Naive thymus-derived CD4-positive, alpha-beta T cell (primary cell): ENCODE measurements at regions of chr1 and their contacts with region 1.

Region 1: GRCh38 chr1:225999227-225999911 is at the start of gene SDE2:
- DNase-seq: peak; percentile 98 to 100 (median 100)
- ATAC-seq: peak; percentile 93
- H3K4me3 ChIP-seq: peak within 1 kb of the TSS; percentile 84
- H3K4me3 Mint-ChIP-seq: peak within 1 kb of the TSS; percentile 89 to 100 (median 100)
- H3K27ac ChIP-seq: peak within 1 kb of the TSS; percentile 98
- H3K27ac Mint-ChIP-seq: peak within 1 kb of the TSS; percentile 95 to 100 (median 100)
- H3K4me1 ChIP-seq: peaks cover 51 to 71% of the 10 kb centered on the region in 2 donors
- H3K4me1 Mint-ChIP-seq: peaks cover 47 to 96% (median 79%) of the 10 kb centered on the region in 7 donors
- H3K27me3 ChIP-seq: no peaks in the 10 kb centered on the region
- H3K27me3 Mint-ChIP-seq: no peaks in the 10 kb centered on the region
- total RNA-seq, gene SDE2: 20.4 to 36.3 (median 20.8) TPM

Region 2: DNA sequence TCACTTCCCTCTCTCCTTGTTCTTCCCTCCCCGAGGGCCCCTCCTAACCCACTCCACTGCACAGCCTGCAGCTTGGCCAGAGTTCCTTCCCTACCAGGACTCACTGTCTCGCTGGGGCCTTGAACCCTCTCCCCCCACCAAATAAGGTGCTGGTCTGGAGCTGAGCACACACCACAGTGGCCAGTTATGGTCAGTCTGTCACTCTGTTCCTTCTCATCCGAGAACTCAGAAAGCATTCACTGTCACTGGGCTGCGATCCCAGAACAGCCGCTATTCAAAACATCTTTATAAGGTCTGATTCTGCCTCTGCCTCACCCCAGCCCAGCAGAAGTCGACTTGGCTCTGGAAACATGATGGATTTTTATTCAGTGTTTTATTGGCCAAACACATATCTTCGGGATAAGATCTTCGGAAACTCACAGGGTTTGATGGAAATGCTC is 551.7 kb before region 1 on chr1:
- CTCF ChIA-PET with region 1: no interaction called
- POLR2A ChIA-PET with region 1: interaction called, 19 read pairs
- intact Hi-C with region 1: loop called (anchors 1 kb)
- DNase-seq: no peak
- ATAC-seq: no peak
- H3K4me3 ChIP-seq: no peak overlapping the region
- H3K4me3 Mint-ChIP-seq: peak overlapping the region in 2 of 10 donors; percentile 16 to 56
- H3K27ac ChIP-seq: no peak overlapping the region
- H3K27ac Mint-ChIP-seq: peak overlapping the region in 8 of 9 donors; percentile 21 to 94 (median 55)
- H3K4me1 ChIP-seq: peaks cover 21 to 37% of the 10 kb centered on the region in 2 donors
- H3K4me1 Mint-ChIP-seq: peaks cover 51 to 72% (median 62%) of the 10 kb centered on the region in 7 donors
- H3K27me3 ChIP-seq: no peaks in the 10 kb centered on the region
- H3K27me3 Mint-ChIP-seq: peaks cover 0 to 2% (median 0%) of the 10 kb centered on the region in 5 donors

Region 3: DNA sequence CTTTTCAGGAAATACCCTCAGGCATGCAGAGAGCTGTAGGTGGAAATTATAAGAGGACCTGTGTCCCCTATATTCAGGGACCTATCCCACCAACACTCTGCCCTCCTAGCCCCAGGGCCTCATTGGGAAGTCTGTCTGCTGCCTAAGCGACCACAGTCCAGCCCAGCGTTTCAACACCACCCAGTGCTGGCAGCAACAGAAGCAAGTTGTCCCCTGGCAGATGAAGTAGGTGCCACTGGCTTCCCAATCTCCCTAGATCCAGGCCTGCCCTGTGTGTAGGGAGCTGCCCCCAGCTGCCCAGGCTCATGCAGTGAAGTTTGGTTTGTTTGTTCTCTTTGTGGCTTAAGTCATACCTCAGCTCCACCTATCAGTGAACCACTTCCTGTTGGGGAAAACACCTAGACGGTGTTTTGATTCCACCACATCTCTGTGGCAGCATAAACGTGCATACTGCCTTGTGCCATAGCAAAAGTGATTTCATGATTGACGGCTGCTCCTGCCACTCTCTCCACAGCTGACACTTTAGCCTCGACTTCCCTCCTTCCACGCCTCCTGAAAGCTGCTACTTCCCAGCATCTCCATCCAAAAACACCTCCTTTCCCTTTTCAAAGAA is 102.3 kb before region 1 on chr1:
- CTCF ChIA-PET with region 1: no interaction called
- POLR2A ChIA-PET with region 1: interaction called, 17 read pairs
- intact Hi-C with region 1: loop called (anchors 1 kb)
- DNase-seq: peak in 8 of 9 donors; percentile 70 to 92 (median 88)
- ATAC-seq: peak; percentile 97
- H3K4me3 ChIP-seq: peak overlapping the region; percentile 50
- H3K4me3 Mint-ChIP-seq: peak overlapping the region; percentile 74 to 89 (median 84)
- H3K27ac ChIP-seq: peak overlapping the region; percentile 85
- H3K27ac Mint-ChIP-seq: peak overlapping the region; percentile 89 to 100 (median 97)
- H3K4me1 ChIP-seq: peaks cover 35 to 45% of the 10 kb centered on the region in 2 donors
- H3K4me1 Mint-ChIP-seq: peaks cover 36 to 67% (median 54%) of the 10 kb centered on the region in 7 donors
- H3K27me3 ChIP-seq: no peaks in the 10 kb centered on the region
- H3K27me3 Mint-ChIP-seq: peaks cover 0 to 47% (median 0%) of the 10 kb centered on the region in 5 donors

Region 4: DNA sequence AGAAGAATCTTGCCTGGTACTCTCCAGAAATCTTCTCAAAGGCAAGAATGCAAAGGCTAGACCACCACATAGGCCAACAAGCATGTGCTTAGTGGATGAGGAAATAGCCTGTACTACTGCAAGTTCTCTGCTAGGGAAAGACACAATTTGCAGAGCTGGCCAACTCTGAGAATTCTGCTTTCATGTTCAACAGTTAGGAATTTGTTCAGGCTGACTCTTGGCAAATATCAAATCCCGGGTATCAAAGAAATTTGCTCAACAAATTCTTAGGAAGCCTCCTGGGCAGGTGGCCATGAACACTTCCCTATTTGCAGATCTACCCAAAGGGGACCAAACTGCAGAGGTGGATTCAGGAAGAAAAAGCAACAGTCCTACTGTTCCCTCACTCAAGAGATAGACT is 48.1 kb after region 1 on chr1:
- CTCF ChIA-PET with region 1: no interaction called
- POLR2A ChIA-PET with region 1: interaction called, 18 read pairs
- intact Hi-C with region 1: no loop called
- DNase-seq: no peak
- ATAC-seq: no peak
- H3K4me3 ChIP-seq: no peak overlapping the region
- H3K4me3 Mint-ChIP-seq: no peak overlapping the region
- H3K27ac ChIP-seq: no peak overlapping the region
- H3K27ac Mint-ChIP-seq: no peak overlapping the region
- H3K4me1 ChIP-seq: no peaks in the 10 kb centered on the region
- H3K4me1 Mint-ChIP-seq: peaks cover 0 to 1% (median 0%) of the 10 kb centered on the region in 7 donors
- H3K27me3 ChIP-seq: no peaks in the 10 kb centered on the region
- H3K27me3 Mint-ChIP-seq: peaks cover 0 to 11% (median 0%) of the 10 kb centered on the region in 5 donors

Region 5: GRCh38 chr1:226109829-226110248 is 110.5 kb after region 1 on chr1:
- CTCF ChIA-PET with region 1: no interaction called
- POLR2A ChIA-PET with region 1: interaction called, 6 read pairs
- intact Hi-C with region 1: loop called in 1 of 2 experiments (anchors 1 kb)
- DNase-seq: peak; percentile 44 to 84 (median 59)
- ATAC-seq: peak; percentile 92
- H3K4me3 ChIP-seq: peak overlapping the region; percentile 59
- H3K4me3 Mint-ChIP-seq: peak overlapping the region; percentile 88 to 96 (median 92)
- H3K27ac ChIP-seq: peak overlapping the region; percentile 67
- H3K27ac Mint-ChIP-seq: peak overlapping the region; percentile 85 to 93 (median 89)
- H3K4me1 ChIP-seq: no peaks in the 10 kb centered on the region
- H3K4me1 Mint-ChIP-seq: peaks cover 7 to 26% (median 21%) of the 10 kb centered on the region in 7 donors
- H3K27me3 ChIP-seq: no peaks in the 10 kb centered on the region
- H3K27me3 Mint-ChIP-seq: peaks cover 0 to 6% (median 0%) of the 10 kb centered on the region in 5 donors

Region 6: GRCh38 chr1:226407497-226408284 is 408.3 kb after region 1 on chr1 and contains the start of gene PARP1:
- CTCF ChIA-PET with region 1: no interaction called
- POLR2A ChIA-PET with region 1: interaction called, 8 read pairs
- intact Hi-C with region 1: loop called (anchors 2 kb)
- DNase-seq: peak; percentile 83 to 93 (median 89)
- ATAC-seq: peak; percentile 94
- H3K4me3 ChIP-seq: peak within 1 kb of the TSS; percentile 82
- H3K4me3 Mint-ChIP-seq: peak within 1 kb of the TSS; percentile 89 to 99 (median 94)
- H3K27ac ChIP-seq: peak within 1 kb of the TSS; percentile 74
- H3K27ac Mint-ChIP-seq: peak within 1 kb of the TSS; percentile 68 to 96 (median 93)
- H3K4me1 ChIP-seq: peaks cover 23 to 30% of the 10 kb centered on the region in 2 donors
- H3K4me1 Mint-ChIP-seq: peaks cover 37 to 46% (median 40%) of the 10 kb centered on the region in 7 donors
- H3K27me3 ChIP-seq: no peaks in the 10 kb centered on the region
- H3K27me3 Mint-ChIP-seq: peaks cover 0 to 3% (median 0%) of the 10 kb centered on the region in 5 donors
- total RNA-seq, gene PARP1: 63.6 to 165 (median 89.3) TPM

Region 7: DNA sequence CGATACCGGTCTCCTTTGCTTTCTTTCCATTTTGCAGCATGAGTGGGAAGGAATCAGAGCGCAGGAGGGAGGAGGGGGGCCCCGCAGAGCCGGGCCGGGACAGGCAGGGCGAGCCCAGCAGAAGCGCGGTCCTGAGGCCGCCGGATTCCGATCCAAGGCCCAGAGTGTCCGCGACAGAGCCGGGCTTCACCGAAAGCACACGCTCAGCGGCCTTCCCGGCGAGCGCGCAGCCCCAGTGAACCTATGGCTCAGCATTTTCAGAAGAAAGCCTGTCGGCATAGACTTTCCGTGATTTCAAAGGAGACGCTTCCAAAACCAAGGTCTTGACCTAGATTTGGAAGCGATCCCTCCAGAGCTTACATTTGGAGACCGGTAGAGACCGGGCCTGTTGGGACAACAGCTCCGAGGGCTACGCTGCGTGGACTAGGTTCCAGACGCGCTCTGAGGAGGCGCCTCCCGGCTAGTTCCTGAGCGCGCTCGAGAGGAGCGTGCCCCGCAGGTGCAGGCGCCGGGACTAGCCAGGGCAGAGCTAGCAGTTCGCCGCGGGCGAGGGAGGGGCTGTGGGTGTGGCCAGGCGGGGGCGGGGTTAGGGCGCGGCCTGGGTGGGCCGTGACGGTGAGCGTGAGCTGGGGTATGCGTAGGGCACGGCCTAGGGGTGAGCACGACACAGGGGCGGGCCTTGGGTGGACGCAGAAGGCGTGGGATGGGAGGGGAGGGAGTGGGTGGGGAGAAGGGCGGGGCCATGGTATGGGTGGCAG is 1788.3 kb after region 1 on chr1:
- CTCF ChIA-PET with region 1: no interaction called
- POLR2A ChIA-PET with region 1: no interaction called
- intact Hi-C with region 1: loop called in 1 of 2 experiments (anchors 5 kb)
- DNase-seq: peak; percentile 76 to 94 (median 90)
- ATAC-seq: peak; percentile 96
- H3K4me3 ChIP-seq: peak overlapping the region; percentile 79
- H3K4me3 Mint-ChIP-seq: peak overlapping the region; percentile 81 to 89 (median 86)
- H3K27ac ChIP-seq: peak overlapping the region; percentile 23
- H3K27ac Mint-ChIP-seq: peak overlapping the region in 8 of 9 donors; percentile 23 to 84 (median 75)
- H3K4me1 ChIP-seq: peaks cover 5 to 6% of the 10 kb centered on the region in 2 donors
- H3K4me1 Mint-ChIP-seq: peaks cover 7 to 18% (median 11%) of the 10 kb centered on the region in 7 donors
- H3K27me3 ChIP-seq: no peaks in the 10 kb centered on the region
- H3K27me3 Mint-ChIP-seq: peaks cover 0 to 4% (median 0%) of the 10 kb centered on the region in 5 donors